Aorta (tissue), 5 donors: ENCODE measurements at regions of chr11 and their contacts with region 1.

Region 1: DNA sequence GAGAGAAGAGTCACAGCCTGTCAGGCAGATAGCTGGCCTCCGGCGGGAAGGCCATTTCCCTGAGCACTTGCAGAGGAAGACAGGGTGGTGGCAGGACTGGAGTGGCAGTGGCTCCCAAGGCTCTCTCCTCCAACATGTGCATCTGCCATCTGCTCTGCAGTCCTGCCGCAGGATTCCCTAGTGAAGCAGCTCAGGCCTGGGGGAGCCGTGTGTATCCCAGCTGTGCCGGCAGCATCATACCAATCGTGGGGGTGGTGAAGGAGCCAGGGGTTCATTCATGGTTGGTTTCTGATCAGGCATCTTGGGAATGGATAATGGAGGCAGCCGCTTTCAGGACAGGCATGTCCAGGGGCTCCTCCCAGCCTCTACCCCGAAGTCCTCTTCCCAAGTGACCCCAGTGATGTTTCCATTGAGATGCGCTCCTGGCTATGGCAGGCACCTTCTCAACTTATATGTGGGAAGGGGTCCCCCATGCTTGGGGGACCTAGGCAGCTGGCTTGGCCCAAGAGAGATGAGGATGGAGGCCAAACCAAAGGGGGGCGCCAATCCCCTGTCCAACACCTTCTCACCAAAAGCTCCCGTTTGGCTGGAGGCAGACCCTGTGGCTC is 6.1 kb downstream of the TAGLN start:
- DNase-seq: no peak
- ATAC-seq: no peak
- H3K4me3 ChIP-seq: no peak overlapping the region
- H3K27ac ChIP-seq: peak overlapping the region; percentile 31 to 33
- H3K4me1 ChIP-seq: no peaks in the 10 kb centered on the region
- H3K27me3 ChIP-seq: no peaks in the 10 kb centered on the region

Region 2: DNA sequence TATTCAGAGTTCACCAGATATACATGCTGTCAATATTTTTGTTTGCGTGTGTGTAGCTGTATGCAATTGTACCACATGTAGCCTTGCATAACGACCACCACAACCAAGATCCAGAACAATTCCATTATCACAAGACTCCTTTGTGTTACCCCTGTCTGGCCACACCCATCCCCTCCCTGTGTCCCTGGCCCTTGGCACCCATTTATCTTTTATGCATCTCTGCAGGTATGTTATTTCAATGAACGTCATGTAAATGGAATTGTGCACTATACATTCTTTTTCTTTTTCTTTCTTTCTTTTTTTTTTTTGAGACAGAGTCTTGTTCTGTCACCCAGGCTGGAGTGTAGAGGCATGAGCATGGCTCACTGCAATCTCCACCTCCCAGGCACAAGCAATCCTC is 70.9 kb before region 1 on chr11:
- intact Hi-C with region 1: loop called in 1 of 2 experiments (anchors 5 kb)
- DNase-seq: no peak
- ATAC-seq: no peak
- H3K4me3 ChIP-seq: no peak overlapping the region
- H3K27ac ChIP-seq: no peak overlapping the region
- H3K4me1 ChIP-seq: no peaks in the 10 kb centered on the region
- H3K27me3 ChIP-seq: peaks cover 0 to 2% of the 10 kb centered on the region in 2 donors